ENCODE measurements at regions of chr11 and their contacts with region 1.

Region 1: DNA sequence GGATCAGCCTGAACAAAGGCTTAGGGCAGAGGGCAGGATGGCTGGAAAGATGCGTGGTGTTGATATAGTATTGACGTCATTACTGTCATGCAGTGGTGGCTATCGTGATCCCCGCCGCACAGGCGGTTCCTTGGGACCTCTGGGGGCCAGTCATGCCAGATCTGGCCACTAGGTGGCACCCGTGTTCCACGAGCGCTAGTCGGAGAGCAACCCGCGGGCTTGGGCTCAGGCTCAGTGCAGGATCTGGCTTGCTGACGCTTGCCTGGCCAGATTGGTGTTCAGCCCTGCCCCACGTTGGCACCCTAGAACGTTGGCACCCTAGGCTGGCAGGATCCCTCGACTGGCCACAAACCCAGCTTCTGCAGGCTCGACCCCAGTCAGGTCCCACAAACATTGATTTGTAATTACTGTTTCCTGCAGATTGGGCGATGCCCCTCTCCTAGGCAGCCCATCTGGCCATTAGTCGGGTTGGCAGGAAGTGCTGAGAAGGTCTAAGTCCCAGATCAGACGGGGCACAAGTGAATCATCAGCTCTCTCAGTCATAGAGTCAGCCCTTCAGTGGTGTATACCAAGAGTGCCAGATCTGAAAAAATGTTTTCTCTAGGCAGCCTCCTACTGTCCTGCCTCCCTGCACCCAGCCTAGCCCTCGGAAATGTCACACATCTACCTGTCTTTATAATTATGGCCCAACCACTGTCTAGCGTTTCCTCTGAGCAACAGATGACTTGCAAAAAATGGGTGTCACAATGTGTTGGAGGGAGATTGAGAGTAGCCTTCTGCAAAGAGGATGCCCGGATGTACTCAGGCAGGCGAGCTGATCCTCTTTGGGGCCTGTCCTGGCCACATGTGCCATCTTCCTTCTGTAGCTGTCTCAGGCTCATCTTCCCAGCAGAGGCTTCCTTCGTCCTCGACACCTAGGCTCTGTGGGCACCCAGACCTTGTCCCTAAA is 315.3 kb downstream of the TMEM135 start:
- DNase-seq: peak; percentile 91 to 98 (median 96)
- H3K4me3 ChIP-seq: peak overlapping the region in 2 of 7 experiments; percentile 39 to 43
- H3K27ac ChIP-seq: no peak overlapping the region
- H3K4me1 ChIP-seq: peaks cover 16 to 40% (median 35%) of the 10 kb centered on the region in 4 experiments
- H3K27me3 ChIP-seq: no peaks in the 10 kb centered on the region

Region 2: DNA sequence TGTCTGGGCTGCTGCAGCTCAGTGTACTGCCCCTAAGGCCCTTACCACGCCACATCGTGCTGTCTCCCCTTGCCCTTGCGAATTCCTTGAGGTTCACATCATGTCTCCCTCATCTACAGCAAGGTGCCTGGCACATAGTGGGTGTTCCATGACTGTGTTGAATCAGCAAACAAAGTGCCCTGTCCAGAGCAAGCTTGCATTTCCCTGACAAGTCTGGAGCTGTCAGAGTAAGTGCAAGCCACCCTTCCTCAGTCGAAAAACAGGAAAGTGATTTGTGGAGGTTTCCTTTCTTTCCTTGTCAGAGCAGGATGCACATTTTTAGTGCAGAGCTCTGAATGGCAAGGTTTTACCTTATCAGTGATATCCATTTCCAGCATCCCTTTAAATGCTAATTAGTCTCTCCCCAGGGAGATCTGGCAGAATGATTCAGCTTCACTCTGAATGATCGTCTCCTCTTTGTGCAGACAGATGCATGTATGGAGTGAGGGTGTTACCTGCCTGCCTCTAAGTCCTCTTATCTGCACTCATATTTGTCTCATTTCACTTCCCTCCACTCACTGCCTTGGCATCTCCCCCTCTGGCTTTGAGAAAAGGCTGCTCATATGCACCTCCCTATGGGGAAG is 15.9 kb after region 1 on chr11:
- CTCF ChIA-PET with region 1: interaction called, 34 read pairs
- POLR2A ChIA-PET with region 1: interaction called, 5 read pairs
- DNase-seq: peak; percentile 52 to 90 (median 81)
- H3K4me3 ChIP-seq: no peak overlapping the region
- H3K27ac ChIP-seq: peak overlapping the region in 1 of 2 experiments; percentile 36
- H3K4me1 ChIP-seq: peaks cover 4 to 33% (median 14%) of the 10 kb centered on the region in 4 experiments
- H3K27me3 ChIP-seq: no peaks in the 10 kb centered on the region

Region 3: GRCh38 chr11:87405843-87406242 is 52.8 kb after region 1 on chr11:
- CTCF ChIA-PET with region 1: interaction called, 10 read pairs
- POLR2A ChIA-PET with region 1: no interaction called
- DNase-seq: no peak
- H3K4me3 ChIP-seq: no peak overlapping the region
- H3K27ac ChIP-seq: no peak overlapping the region
- H3K4me1 ChIP-seq: peaks cover 0 to 8% (median 0%) of the 10 kb centered on the region in 4 experiments
- H3K27me3 ChIP-seq: no peaks in the 10 kb centered on the region

Region 4: DNA sequence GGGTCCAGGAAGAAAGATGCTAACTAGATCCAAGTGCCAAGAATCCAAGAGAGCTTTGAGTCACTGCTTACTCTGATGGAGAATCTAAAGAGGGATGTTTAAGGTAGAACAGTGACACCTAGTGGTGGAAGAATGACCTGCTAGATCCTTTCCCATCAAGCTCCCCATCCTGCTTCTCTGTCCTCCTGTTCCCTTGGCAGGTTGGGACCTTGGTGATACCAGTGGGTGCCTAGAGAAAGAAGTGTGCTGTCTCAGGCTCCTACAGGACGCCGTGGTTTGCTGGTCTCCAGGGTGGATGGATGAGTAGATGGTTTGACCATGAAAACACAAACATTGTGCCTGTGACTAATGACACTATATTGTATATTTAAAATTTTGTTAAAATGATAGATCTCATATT is 68.4 kb after region 1 on chr11:
- CTCF ChIA-PET with region 1: interaction called, 137 read pairs
- POLR2A ChIA-PET with region 1: interaction called, 3 read pairs
- DNase-seq: peak; percentile 76 to 86 (median 79)
- H3K4me3 ChIP-seq: no peak overlapping the region
- H3K27ac ChIP-seq: no peak overlapping the region
- H3K4me1 ChIP-seq: no peaks in the 10 kb centered on the region
- H3K27me3 ChIP-seq: no peaks in the 10 kb centered on the region